ENCODE measurements at regions of chr4 and their contacts with region 1.

Region 1: DNA sequence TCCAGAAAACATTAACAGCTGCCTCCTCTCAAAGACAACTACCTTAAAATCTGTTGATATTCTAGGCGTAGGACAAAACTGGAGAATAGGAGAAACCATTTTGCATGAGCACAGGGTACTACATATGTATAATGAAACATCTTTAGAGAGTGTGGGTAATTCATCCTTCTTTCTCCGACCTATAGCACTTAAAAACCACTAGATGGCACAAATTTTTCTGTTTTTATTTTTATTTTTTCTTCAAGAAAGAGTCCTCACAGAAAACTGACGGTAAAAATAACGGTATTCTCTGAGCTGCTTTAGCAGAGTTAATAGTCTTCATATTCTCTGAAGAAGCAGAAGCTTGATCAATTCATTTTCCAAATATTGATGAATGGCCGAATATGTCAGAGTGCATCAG is 14.6 kb downstream of the SMIM31 start:
- DNase-seq: no peak
- H3K4me3 Mint-ChIP-seq: no peak overlapping the region
- H3K27ac Mint-ChIP-seq: no peak overlapping the region
- H3K4me1 Mint-ChIP-seq: no peaks in the 10 kb centered on the region
- H3K27me3 Mint-ChIP-seq: no peaks in the 10 kb centered on the region
- CTCF ChIP-seq: no peak

Region 2: DNA sequence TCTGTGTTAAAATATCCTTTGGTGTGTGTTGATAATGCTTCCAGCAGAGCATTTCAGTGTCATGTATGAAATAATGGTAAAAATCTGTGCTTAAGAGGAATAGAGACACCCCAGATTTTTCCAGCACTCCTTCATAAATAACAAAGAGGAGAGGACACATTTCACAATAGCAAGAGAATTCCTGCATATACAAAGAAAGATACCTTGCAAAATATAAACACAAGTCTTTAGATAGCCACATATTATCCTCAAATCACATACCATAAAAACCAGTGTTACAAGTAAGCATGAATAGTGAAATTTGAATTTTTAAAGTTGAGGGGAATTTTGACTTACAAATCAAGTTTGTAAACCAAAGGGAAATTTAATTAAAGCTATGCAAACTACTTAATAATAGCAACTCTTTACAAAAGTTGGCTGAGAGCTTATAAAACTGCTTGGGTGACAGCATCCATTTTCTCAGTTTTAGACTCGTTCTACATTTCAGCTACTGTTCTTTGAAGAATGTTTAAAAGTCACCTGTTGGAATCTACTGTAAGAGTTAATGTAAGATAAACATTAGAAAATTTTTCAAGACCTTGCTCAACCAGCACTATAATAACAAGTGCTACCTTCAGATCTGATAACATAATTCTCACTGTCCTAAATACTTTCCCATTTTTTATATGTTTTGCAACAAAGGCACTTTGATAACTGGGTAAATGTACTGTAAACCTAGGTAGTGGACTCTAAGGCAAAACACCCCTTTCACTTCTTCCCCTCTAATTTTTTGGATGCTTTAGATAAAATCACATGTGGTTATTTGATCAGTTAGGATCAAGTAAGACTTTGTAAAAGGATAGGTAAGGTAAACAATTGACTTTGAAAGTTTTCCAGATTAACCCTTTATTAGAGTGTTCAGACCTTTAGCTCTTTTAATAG is 112.2 kb after region 1 on chr4:
- CTCF ChIA-PET with region 1: no interaction called
- intact Hi-C with region 1: loop called (anchors 5 kb)
- DNase-seq: no peak
- H3K4me3 Mint-ChIP-seq: no peak overlapping the region
- H3K27ac Mint-ChIP-seq: no peak overlapping the region
- H3K4me1 Mint-ChIP-seq: no peaks in the 10 kb centered on the region
- H3K27me3 Mint-ChIP-seq: no peaks in the 10 kb centered on the region
- CTCF ChIP-seq: no peak